Cardiac septum (tissue), 1 donor: ENCODE measurements at regions of chr1 and their contacts with region 1.

Region 1: GRCh38 chr1:87151500-87152421 is 176.9 kb upstream of the LMO4 start:
- DNase-seq: peak; percentile 84

Region 2: DNA sequence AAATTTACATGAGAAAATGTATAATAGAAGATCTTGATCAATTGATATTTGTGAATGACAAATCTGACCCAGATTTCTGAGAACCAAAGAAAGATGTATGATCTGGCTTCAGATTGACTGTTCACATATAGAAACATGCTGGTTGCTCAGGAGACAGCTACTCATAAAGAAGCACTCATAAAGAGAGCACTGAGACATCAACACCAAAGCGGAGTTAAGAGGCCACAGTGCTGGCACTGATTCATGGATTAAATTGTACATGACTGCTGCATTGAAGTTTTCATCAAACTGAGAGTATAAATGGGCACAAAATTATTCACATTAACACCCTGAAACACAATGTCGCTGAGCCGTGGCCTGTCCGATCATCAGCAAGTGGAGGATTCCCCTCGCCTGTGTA is 401.2 kb before region 1 on chr1:
- intact Hi-C with region 1: no loop called
- DNase-seq: no peak

Region 3: DNA sequence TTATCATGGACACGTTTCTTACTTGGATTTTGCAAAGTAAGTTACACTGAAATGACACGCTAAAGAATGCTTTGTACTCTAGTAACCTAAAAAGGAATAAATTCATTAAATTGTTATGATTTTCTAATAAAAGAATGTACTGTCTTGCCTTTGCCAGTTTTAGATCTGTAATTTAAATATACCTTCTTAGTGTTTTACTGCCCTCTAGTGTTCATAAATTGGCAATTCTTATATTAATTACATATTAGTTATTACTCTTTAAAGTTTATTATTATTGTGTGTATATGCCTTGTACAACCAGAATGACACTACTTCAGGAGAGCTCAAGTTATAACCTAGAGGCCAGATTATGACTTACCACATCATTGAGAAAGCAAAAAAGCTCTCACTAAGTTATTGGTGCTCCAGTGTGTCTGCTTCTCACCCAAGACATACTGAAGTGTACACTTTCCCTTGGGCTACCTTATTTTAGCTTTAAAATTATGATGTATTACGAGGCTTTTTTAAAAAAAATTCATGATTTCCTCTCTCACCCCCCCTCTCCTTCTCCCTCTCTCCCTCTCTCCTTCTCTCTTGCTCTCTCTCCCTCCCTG is 67.4 kb before region 1 on chr1:
- intact Hi-C with region 1: no loop called
- DNase-seq: no peak

Region 4: DNA sequence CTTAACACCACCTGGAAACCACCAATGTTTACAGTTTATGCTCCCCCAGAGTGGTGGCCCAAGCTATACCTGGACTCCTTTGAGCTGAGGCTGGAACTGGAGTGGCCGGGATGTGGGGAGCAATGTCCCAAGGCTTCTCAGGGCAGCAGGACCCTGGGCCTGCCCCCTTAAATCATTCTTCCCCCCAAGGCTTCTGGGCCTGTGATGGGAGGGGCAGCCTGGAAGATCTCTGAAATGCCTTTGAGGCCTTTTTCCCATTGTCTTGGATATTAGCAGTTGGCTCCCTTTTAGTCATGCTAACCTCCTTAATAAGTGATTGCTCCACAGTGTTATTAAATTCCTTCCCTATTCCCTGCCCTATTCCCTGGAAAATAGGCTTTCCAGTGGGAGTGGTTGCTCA is 51.5 kb before region 1 on chr1:
- intact Hi-C with region 1: no loop called
- DNase-seq: no peak

Region 5: GRCh38 chr1:87226341-87226760 is 74.6 kb after region 1 on chr1:
- intact Hi-C with region 1: loop called (anchors 2 kb)
- DNase-seq: no peak